ENCODE measurements at regions of chr10 and their contacts with region 1.

Region 1: DNA sequence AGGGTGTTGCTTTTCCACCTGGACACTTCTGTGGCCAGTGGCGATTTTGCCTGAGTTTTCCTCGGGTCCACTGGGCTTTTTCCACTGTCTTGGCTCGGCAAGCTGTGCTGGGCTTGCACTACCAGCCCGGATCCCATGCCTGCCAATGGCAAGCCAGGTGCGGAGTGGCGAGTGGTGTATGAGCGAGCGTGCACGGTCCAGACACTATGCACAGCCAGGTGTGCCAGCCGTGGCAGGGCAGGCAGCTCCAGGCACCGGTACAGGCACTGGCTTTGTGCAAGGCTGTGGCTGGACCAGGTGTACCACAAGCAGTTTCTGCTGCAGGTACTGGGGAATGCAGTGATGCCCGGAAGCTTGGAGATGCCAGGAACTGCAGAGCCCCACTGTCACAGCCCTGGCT is 22.1 kb downstream of the INPP5F start:
- DNase-seq: no peak
- H3K4me3 ChIP-seq: no peak overlapping the region
- CTCF ChIP-seq: no peak

Region 2: DNA sequence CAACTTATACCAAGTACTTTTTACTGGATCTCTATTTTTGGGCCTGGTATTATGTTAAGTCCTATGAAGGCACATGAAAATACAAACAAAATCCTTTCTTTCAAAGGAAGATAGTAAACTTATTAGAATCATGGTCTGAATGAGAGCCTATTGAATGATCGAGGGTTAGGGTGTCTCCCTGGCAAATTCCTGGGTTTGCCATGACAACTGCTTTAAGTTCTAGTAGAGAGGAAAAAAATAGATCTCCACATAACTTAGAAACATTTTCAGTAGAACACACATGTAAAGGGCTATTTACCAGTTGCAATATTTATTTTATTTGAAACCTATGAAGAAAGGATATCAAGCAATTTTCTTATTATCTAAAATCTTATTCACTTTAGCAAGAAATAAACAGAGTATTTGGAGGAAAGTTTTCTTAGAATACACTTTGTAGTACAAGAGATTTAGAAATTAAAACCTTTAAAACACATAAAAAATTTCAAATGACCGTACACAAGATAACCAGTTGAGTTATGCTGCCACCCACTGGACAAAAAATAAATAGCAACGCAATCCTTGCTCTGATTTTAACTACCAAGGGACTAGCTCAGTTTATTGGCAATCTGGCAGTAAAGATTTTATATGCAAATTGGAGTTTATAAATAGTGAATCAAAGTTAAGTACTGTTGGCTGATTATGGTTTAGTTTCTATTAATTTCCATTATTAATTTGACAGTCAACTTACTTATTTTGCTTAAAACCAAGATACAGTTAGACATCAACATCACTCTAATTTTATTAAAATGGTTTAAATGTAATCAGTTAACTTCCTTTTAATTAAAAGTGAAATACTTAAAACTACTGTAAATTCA is 1027.0 kb before region 1 on chr10:
- in situ Hi-C with region 1: no loop called
- DNase-seq: peak; percentile 44
- H3K4me3 ChIP-seq: no peak overlapping the region
- CTCF ChIP-seq: peak; percentile 53

Region 3: DNA sequence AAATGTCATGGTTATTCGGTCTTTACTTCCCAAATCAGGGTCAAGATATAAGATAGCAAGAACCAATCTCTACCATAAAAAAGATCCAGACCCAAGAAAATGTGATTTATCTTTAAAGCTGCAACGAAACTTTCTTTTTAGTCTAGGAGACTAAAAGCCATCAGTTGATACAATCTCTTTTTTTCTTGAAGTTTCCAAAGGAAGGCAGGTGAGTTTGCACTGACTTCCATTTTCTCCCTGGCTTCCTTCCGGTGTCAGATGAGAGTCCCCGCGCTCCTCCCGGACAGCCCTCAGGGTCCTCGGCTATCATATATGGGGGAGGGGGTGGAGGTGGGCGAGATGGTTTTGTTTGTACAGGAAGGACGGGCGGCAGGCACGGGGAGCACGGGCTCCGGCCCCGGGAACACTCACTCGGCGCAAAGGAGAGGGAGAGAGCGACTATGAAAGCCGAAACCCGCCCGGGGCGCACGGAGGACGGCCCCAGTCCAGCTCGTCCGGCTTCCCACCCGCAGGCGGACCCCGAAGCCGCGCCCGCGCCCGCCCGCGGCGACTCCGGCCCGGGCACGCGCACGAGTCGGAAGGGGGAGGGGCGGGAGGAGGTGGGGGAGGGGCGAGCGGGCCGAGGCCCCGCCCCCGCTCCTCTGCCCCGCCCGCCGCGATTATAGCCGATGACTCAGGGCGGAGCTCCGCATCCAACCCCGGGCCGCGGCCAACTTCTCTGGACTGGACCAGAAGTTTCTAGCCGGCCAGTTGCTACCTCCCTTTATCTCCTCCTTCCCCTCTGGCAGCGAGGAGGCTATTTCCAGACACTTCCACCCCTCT is 97.0 kb before region 1 on chr10 and contains the start of gene BAG3:
- in situ Hi-C with region 1: no loop called
- DNase-seq: peak; percentile 70
- H3K4me3 ChIP-seq: peak within 1 kb of the TSS; percentile 86
- CTCF ChIP-seq: no peak

Region 4: GRCh38 chr10:119817991-119818888 is 70.3 kb after region 1 on chr10:
- in situ Hi-C with region 1: no loop called
- DNase-seq: no peak
- H3K4me3 ChIP-seq: peak overlapping the region; percentile 38
- CTCF ChIP-seq: peak; percentile 13

Region 5: DNA sequence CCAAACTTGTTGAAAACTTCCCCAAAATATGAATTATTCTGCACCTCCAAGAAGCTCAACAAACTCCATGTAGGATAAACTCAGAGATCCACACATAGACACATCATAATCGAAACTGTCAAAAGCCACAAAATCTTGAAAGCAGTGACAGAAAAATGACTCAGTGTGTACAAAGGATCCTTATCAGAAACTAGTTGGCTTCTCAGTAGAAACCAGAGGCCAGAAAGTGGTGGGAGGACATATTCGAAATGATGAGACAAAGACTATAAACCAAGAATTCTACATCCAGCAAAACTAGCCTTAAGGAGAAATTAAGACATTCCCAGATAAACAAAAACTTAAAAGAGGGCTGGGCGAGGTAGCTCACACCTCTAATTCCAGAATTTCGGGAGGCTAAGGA is 86.2 kb after region 1 on chr10:
- in situ Hi-C with region 1: no loop called
- DNase-seq: no peak
- H3K4me3 ChIP-seq: no peak overlapping the region
- CTCF ChIP-seq: no peak

Region 6: DNA sequence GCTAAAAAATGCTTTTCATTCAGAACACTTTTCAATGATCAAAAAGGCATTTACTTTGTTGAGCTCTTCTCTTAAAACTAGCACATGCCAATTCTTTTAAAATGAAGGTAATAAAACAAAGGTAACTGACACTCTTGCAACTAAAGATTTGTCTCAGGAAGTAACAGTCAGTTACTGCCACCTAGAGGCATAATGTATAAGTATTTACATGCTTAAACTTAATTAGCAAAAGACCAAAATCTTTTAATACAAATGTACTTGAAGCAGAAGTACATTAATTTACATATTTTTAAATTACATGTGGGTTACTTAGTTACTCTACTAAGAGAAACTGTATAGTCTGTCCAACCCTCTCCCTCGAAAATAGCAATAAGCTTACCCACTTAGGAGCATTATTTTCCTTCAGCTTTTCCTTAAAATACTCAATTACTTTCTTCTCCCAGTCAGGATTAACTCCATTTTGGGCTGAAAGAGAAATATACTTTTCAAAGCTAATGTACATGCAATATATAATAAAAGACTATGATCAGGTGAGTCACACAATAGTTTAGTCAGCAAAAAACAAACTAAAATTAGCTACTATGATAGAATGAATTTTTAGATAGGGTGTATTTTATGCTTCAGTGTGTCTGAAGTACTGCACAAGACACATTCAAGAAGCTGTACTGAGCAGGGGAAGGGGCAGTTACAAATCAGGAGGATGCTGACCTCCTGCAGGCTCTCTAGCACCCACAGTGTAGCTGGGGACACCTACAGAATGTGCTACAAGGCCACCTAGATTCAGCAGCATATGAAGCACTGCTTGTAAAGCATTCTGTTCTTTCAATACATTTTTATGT is 111.7 kb after region 1 on chr10:
- in situ Hi-C with region 1: loop called (anchors 5 kb)
- DNase-seq: peak; percentile 59
- H3K4me3 ChIP-seq: no peak overlapping the region
- CTCF ChIP-seq: no peak